Activated CD8-positive, alpha-beta T cell treated with anti-CD3 and anti-CD28 coated beads, Interleukin-2, amount 10 ng/mL, durations not matched to agents 7 days and 5 days (primary cell): ENCODE measurements at regions of chr6 and their contacts with region 1.

Region 1: DNA sequence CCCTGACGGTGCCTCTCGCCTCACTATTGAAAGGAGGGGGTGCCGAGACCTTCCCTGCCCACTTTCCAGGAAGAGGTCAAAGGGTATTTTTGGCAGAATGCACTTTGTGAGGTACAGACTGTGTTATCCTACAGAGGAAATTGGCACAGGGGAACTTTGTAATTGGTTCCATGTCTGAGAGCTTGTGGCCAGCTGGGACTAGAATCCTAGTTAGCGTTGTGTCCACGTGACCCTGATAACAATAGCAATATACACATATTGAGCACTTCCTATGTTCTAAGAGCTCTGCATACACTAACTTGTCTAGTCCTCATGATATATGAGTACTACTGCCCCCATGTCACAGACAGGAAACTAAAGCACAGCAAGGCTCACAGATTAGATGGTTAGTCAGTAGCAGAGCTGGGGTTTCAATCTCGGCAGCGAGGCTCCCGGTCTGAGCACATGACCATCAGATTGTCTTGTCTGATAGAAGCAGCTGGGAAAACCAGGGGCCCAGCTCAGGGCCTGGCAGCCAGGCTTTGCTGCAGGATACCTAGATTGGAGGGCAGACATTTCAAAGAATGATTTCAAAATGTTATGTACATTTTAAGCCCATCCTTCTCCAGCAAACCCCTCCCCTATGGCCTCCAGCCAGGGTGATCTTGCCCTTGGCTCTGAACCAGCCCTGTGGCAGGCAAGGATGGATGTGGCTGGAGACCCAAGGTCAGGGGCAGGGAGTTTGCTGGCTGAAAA is 1.4 kb downstream of the MAPK13 start:
- DNase-seq: peak; percentile 69
- ATAC-seq: peak; percentile 73
- H3K4me3 Mint-ChIP-seq: peak overlapping the region; percentile 86
- H3K27ac Mint-ChIP-seq: peak overlapping the region; percentile 93
- H3K4me1 Mint-ChIP-seq: peaks cover 62% of the 10 kb centered on the region
- H3K27me3 Mint-ChIP-seq: no peaks in the 10 kb centered on the region

Region 2: GRCh38 chr6:35804996-35805736 is 326.5 kb before region 1 on chr6 and contains the start of gene LHFPL5:
- CTCF ChIA-PET with region 1: no interaction called
- POLR2A ChIA-PET with region 1: no interaction called
- DNase-seq: peak; percentile 62
- ATAC-seq: peak; percentile 95
- H3K4me3 Mint-ChIP-seq: no peak within 1 kb of the TSS
- H3K27ac Mint-ChIP-seq: no peak within 1 kb of the TSS
- H3K4me1 Mint-ChIP-seq: peaks cover 2% of the 10 kb centered on the region
- H3K27me3 Mint-ChIP-seq: peaks cover 2% of the 10 kb centered on the region
- total RNA-seq, gene LHFPL5: not detected

Region 3: GRCh38 chr6:36083446-36083845 is 48.2 kb before region 1 on chr6:
- CTCF ChIA-PET with region 1: no interaction called
- POLR2A ChIA-PET with region 1: no interaction called
- DNase-seq: no peak
- ATAC-seq: no peak
- H3K4me3 Mint-ChIP-seq: no peak overlapping the region
- H3K27ac Mint-ChIP-seq: no peak overlapping the region
- H3K4me1 Mint-ChIP-seq: no peaks in the 10 kb centered on the region
- H3K27me3 Mint-ChIP-seq: no peaks in the 10 kb centered on the region

Region 4: GRCh38 chr6:36171573-36171972 is 39.9 kb after region 1 on chr6:
- CTCF ChIA-PET with region 1: interaction called, 10 read pairs
- POLR2A ChIA-PET with region 1: interaction called, 10 read pairs
- DNase-seq: no peak
- ATAC-seq: peak; percentile 86
- H3K4me3 Mint-ChIP-seq: no peak overlapping the region
- H3K27ac Mint-ChIP-seq: peak overlapping the region; percentile 21
- H3K4me1 Mint-ChIP-seq: peaks cover 25% of the 10 kb centered on the region
- H3K27me3 Mint-ChIP-seq: no peaks in the 10 kb centered on the region

Region 5: DNA sequence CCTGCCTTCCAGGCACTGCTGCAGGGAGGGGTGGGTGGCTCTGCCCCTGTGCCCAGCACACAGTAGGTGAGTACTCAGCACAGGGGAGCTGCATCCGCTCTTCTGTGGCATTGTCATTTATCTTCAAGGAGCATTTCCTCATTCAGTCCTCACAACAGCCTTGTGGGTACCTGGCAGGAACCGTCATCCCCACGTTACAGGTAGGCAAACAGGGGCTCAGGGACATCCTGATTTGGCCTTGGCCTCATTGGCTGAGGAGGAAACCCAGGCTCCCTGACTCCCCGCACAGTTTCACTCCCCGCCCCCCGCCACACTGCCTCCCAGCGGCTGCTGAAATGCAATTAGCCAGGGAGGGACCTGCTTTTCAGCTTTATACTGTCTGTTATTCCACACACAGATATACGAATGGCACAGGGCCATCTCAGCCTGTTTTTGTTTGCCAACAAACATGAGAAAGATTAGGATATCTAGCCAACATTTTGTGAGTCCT is 113.9 kb after region 1 on chr6:
- CTCF ChIA-PET with region 1: no interaction called
- POLR2A ChIA-PET with region 1: no interaction called
- DNase-seq: peak; percentile 34
- ATAC-seq: peak; percentile 27
- H3K4me3 Mint-ChIP-seq: no peak overlapping the region
- H3K27ac Mint-ChIP-seq: no peak overlapping the region
- H3K4me1 Mint-ChIP-seq: peaks cover 20% of the 10 kb centered on the region
- H3K27me3 Mint-ChIP-seq: peaks cover 14% of the 10 kb centered on the region

Region 6: GRCh38 chr6:36314221-36315014 is 182.7 kb after region 1 on chr6:
- CTCF ChIA-PET with region 1: no interaction called
- POLR2A ChIA-PET with region 1: no interaction called
- DNase-seq: no peak
- ATAC-seq: no peak
- H3K4me3 Mint-ChIP-seq: no peak overlapping the region
- H3K27ac Mint-ChIP-seq: no peak overlapping the region
- H3K4me1 Mint-ChIP-seq: no peaks in the 10 kb centered on the region
- H3K27me3 Mint-ChIP-seq: peaks cover 18% of the 10 kb centered on the region